ENCODE measurements at regions of chr17 and their contacts with region 1.

Region 1: GRCh38 chr17:35825206-35825605 is 15.9 kb downstream of the TAF15 start:
- DNase-seq: no peak
- H3K4me3 ChIP-seq: no peak overlapping the region
- H3K27ac ChIP-seq: no peak overlapping the region
- H3K4me1 ChIP-seq: no peaks in the 10 kb centered on the region
- H3K27me3 ChIP-seq: no peaks in the 10 kb centered on the region
- CTCF ChIP-seq: no peak
- EP300 ChIP-seq: no peak
- POLR2A ChIP-seq: no peak

Region 2: GRCh38 chr17:35849469-35850348 is 24.5 kb after region 1 on chr17:
- in situ Hi-C with region 1: no loop called
- intact Hi-C with region 1: loop called (anchors 1 kb)
- DNase-seq: peak; percentile 43
- H3K4me3 ChIP-seq: no peak overlapping the region
- H3K27ac ChIP-seq: no peak overlapping the region
- H3K4me1 ChIP-seq: no peaks in the 10 kb centered on the region
- H3K27me3 ChIP-seq: no peaks in the 10 kb centered on the region
- CTCF ChIP-seq: peak; percentile 55 to 77 (median 69)
- EP300 ChIP-seq: no peak
- POLR2A ChIP-seq: no peak

Region 3: DNA sequence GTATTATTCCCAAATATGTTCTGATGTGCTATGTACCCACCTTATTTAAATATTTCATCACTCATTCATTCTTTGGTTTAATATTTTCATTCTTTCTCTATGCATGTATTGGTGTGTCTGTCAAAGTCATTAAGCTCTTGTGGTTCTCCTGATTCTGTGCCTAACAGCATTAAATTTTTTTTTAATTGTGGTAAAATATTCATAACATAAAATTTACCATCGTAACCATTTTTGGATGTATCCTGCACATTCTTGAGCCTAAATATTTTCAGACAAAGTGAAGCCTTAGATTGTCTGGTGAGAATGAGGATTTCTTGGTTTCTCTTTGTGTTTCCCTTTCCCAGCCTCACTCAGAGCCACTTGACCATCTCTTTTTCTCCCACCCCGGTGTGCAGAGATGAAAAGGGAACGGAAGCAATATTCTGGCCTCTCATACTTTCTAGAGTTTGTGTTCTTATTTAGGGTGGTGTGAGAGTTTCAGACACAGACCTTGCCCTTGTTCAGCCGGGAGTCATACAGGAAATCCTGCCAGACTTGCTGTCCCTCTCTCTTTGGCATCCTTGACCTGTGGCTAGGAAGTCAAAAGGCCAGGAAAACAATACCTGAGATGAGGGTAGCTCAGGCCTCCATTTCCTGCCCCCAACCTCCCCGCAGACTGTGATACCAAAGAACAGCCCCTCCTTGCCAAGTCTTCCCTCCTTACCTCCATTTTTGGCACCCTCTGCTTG is 50.0 kb after region 1 on chr17:
- in situ Hi-C with region 1: no loop called
- intact Hi-C with region 1: loop called (anchors 2 kb)
- DNase-seq: no peak
- H3K4me3 ChIP-seq: no peak overlapping the region
- H3K27ac ChIP-seq: no peak overlapping the region
- H3K4me1 ChIP-seq: no peaks in the 10 kb centered on the region
- H3K27me3 ChIP-seq: no peaks in the 10 kb centered on the region
- CTCF ChIP-seq: no peak
- EP300 ChIP-seq: no peak
- POLR2A ChIP-seq: no peak

Measured in transverse colon (tissue), 4 donors.